T-cell (primary cell): ENCODE measurements at regions of chr18 and their contacts with region 1.

Region 1: GRCh38 chr18:3217948-3218647 is 1.7 kb downstream of the MYOM1 start:
- DNase-seq: no peak
- ATAC-seq: no peak
- H3K4me3 ChIP-seq: no peak overlapping the region
- H3K4me3 Mint-ChIP-seq: no peak overlapping the region
- H3K27ac ChIP-seq: no peak overlapping the region
- H3K27ac Mint-ChIP-seq: no peak overlapping the region
- H3K4me1 ChIP-seq: peaks cover 3 to 7% of the 10 kb centered on the region in 2 experiments
- H3K4me1 Mint-ChIP-seq: peaks cover 8 to 14% (median 11%) of the 10 kb centered on the region in 3 donors
- H3K27me3 ChIP-seq: no peaks in the 10 kb centered on the region
- H3K27me3 Mint-ChIP-seq: no peaks in the 10 kb centered on the region

Region 2: DNA sequence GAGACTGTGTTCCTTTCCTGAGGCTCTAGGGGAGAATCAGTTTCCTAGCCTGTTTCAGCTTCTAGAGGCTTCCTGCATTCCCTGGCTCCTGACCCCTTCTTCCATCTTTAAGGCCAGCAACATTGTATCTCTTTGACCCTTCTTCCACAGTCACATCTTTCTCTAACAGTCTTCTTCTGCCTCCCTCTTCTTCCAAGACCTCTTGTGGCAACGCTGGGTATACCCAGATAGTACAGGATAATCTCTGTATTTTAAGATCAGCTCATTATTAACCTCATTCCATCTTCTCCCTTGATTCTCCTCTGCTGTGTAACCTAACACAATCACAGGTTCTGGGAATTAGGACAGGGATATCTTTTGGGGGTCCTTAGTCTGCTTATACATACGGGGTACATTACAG is 20.6 kb after region 1 on chr18:
- CTCF ChIA-PET with region 1: interaction called in 1 of 2 experiments, 10 read pairs
- POLR2A ChIA-PET with region 1: no interaction called
- DNase-seq: no peak
- ATAC-seq: peak in 1 of 4 experiments; percentile 23
- H3K4me3 ChIP-seq: no peak overlapping the region
- H3K4me3 Mint-ChIP-seq: no peak overlapping the region
- H3K27ac ChIP-seq: no peak overlapping the region
- H3K27ac Mint-ChIP-seq: peak overlapping the region in 1 of 2 donors; percentile 16
- H3K4me1 ChIP-seq: peaks cover 0 to 4% of the 10 kb centered on the region in 2 experiments
- H3K4me1 Mint-ChIP-seq: peaks cover 4 to 13% (median 7%) of the 10 kb centered on the region in 3 donors
- H3K27me3 ChIP-seq: no peaks in the 10 kb centered on the region
- H3K27me3 Mint-ChIP-seq: no peaks in the 10 kb centered on the region